HepG2 (cell line): ENCODE measurements at regions of chr20 and their contacts with region 1.

Region 1: GRCh38 chr20:50344232-50344925 is 153.7 kb downstream of the CEBPB start:
- DNase-seq: peak; percentile 62
- ATAC-seq: peak; percentile 75
- H3K4me3 ChIP-seq: no peak overlapping the region; a peak in 1 of 6 replicates
- H3K27ac ChIP-seq: no peak overlapping the region
- H3K4me1 ChIP-seq: peaks cover 81% of the 10 kb centered on the region
- H3K27me3 ChIP-seq: peaks cover 3 to 42% of the 10 kb centered on the region in 2 experiments; a peak in 3 of 5 replicates
- CTCF ChIP-seq: peak; percentile 82
- EP300 ChIP-seq: peak in 1 of 2 experiments; percentile 14; a peak in 1 of 4 replicates
- POLR2A ChIP-seq: no peak
- RAD21 ChIP-seq: peak; percentile 82; the same call in 1 of the 2 replicates

Region 2: GRCh38 chr20:50292324-50293243 is 51.8 kb before region 1 on chr20:
- CTCF ChIA-PET with region 1: no interaction called
- POLR2A ChIA-PET with region 1: no interaction called
- in situ Hi-C with region 1: no loop called
- intact Hi-C with region 1: no loop called
- DNase-seq: peak; percentile 97
- ATAC-seq: peak; percentile 69
- H3K4me3 ChIP-seq: peak overlapping the region in 1 of 3 experiments; percentile 39; a peak in 3 of 6 replicates
- H3K27ac ChIP-seq: peak overlapping the region; percentile 77
- H3K4me1 ChIP-seq: peaks cover 68% of the 10 kb centered on the region
- H3K27me3 ChIP-seq: no peaks in the 10 kb centered on the region
- CTCF ChIP-seq: peak; percentile 41
- EP300 ChIP-seq: peak; percentile 96 to 99
- POLR2A ChIP-seq: peak in 1 of 2 experiments; percentile 14; a peak in 2 of 4 replicates
- RAD21 ChIP-seq: peak; percentile 63

Region 3: GRCh38 chr20:50379049-50379990 is 34.9 kb after region 1 on chr20:
- CTCF ChIA-PET with region 1: no interaction called
- POLR2A ChIA-PET with region 1: no interaction called
- in situ Hi-C with region 1: no loop called
- intact Hi-C with region 1: loop called (anchors 1 kb)
- DNase-seq: no peak
- ATAC-seq: no peak
- H3K4me3 ChIP-seq: peak overlapping the region in 1 of 3 experiments; percentile 12; a peak in 1 of 6 replicates
- H3K27ac ChIP-seq: peak overlapping the region; percentile 4
- H3K4me1 ChIP-seq: peaks cover 86% of the 10 kb centered on the region
- H3K27me3 ChIP-seq: no peaks in the 10 kb centered on the region
- CTCF ChIP-seq: no peak
- EP300 ChIP-seq: no peak
- POLR2A ChIP-seq: no peak
- RAD21 ChIP-seq: no peak

Region 4: DNA sequence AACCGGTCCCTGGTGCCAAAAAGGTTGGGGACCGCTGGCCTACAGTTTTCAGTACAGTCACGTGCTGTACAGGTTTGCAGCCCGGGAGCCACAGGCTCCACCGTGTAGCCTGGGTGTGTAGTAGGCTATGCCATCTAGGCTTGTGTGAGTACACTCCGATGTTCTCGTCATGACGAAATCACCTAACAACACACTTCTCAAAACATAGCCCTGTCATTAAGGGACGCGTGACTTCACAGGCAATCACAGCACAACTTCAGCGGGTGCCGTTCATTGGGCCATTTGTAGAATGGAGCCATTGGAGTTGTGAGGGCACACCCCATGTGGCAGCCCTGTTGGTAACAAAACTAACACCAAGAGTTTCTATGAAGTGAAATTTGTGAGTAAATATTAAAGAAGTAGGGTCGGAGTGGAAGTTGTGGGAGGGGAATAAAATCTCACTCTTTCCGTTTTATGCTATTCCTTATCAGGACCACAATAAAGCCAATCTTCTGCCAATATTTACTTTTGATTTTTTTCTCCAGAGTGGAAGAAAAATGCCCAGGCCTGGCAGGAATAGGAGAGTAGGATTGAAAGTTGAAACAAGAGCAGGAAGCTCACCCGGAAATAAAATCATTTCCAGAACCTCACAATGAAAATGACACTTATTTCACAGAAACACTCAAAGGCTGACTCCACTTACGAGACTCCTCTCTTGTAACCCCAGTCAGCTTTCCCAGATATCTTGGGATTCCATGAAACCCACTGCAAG is 102.1 kb after region 1 on chr20:
- CTCF ChIA-PET with region 1: no interaction called
- POLR2A ChIA-PET with region 1: no interaction called
- in situ Hi-C with region 1: no loop called
- intact Hi-C with region 1: no loop called
- DNase-seq: peak; percentile 61
- ATAC-seq: no peak
- H3K4me3 ChIP-seq: no peak overlapping the region; a peak in 1 of 6 replicates
- H3K27ac ChIP-seq: no peak overlapping the region
- H3K4me1 ChIP-seq: peaks cover 79% of the 10 kb centered on the region
- H3K27me3 ChIP-seq: no peaks in the 10 kb centered on the region; a peak in 1 of 5 replicates
- CTCF ChIP-seq: no peak
- EP300 ChIP-seq: no peak
- POLR2A ChIP-seq: no peak
- RAD21 ChIP-seq: no peak